Heart right ventricle (tissue), 16 donors: ENCODE measurements at regions of chr19 and their contacts with region 1.

Region 1: GRCh38 chr19:46840136-46840942 is 10.3 kb downstream of the AP2S1 start:
- DNase-seq: peak in 1 of 2 donors; percentile 47
- ATAC-seq: peak; percentile 15 to 77 (median 60)
- H3K4me3 ChIP-seq: no peak overlapping the region
- H3K27ac ChIP-seq: peak overlapping the region in 9 of 10 donors; percentile 21 to 81 (median 50)
- H3K4me1 ChIP-seq: peaks cover 3 to 35% (median 17%) of the 10 kb centered on the region in 9 donors
- H3K27me3 ChIP-seq: no peaks in the 10 kb centered on the region
- CTCF ChIP-seq: peak; percentile 65 to 90 (median 86)

Region 2: DNA sequence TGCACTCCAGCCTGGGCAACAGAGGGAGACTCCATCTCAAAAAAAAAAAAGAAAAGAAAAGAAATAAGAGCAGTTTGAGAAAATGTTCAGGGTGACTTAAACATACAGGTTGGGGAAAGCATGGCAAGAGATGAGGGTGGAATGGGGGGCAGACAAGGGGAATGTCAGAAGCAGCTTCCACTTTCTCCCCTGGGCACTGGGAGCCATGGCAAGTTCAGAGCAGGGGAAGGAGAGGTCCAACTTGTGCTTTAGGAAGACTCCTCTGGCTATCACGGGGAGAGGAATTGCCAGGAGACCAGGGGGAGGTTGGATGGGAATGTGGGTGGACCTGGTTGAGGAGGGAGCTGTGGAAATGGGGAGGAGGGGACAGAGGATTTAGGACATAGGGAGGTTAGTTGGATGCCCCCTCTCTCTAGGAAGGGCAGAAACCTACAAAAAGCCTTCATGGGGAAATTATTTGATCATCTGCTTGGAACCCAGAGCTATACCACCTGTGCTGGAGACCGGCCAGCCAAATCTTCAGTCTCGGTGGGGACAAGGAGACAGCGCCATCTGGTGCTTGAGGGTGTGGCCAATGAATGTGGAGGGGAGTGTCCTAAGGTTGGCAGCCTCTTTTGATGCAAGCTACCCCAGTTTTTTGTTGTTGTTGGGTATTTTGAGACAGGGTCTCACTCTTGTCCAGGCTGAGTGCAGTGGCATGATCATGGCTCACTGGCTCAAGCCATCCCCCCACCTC is 86.8 kb before region 1 on chr19:
- intact Hi-C with region 1: loop called (anchors 1 to 5 kb)
- DNase-seq: peak in 1 of 2 donors; percentile 52
- ATAC-seq: peak in 2 of 8 donors; percentile 16 to 20
- H3K4me3 ChIP-seq: no peak overlapping the region
- H3K27ac ChIP-seq: no peak overlapping the region
- H3K4me1 ChIP-seq: peaks cover 0 to 29% (median 4%) of the 10 kb centered on the region in 9 donors
- H3K27me3 ChIP-seq: no peaks in the 10 kb centered on the region
- CTCF ChIP-seq: peak in 7 of 9 donors; percentile 43 to 65 (median 53)

Region 3: GRCh38 chr19:46759817-46760333 is 80.5 kb before region 1 on chr19:
- intact Hi-C with region 1: loop called (anchors 1 to 5 kb)
- DNase-seq: no peak
- ATAC-seq: peak in 1 of 8 donors; percentile 22
- H3K4me3 ChIP-seq: no peak overlapping the region
- H3K27ac ChIP-seq: no peak overlapping the region
- H3K4me1 ChIP-seq: peaks cover 0 to 39% (median 8%) of the 10 kb centered on the region in 9 donors
- H3K27me3 ChIP-seq: no peaks in the 10 kb centered on the region
- CTCF ChIP-seq: no peak

Region 4: GRCh38 chr19:46788262-46788967 is 51.9 kb before region 1 on chr19 and contains the start of gene SLC1A5:
- intact Hi-C with region 1: loop called in 3 of 10 experiments (anchors 10 kb)
- DNase-seq: peak; percentile 95 to 97
- ATAC-seq: peak; percentile 89 to 94 (median 92)
- H3K4me3 ChIP-seq: peak within 1 kb of the TSS; percentile 53 to 87 (median 68)
- H3K27ac ChIP-seq: peak within 1 kb of the TSS; percentile 63 to 93 (median 88)
- H3K4me1 ChIP-seq: peaks cover 9 to 53% (median 40%) of the 10 kb centered on the region in 9 donors
- H3K27me3 ChIP-seq: peaks cover 0 to 6% (median 0%) of the 10 kb centered on the region in 7 donors
- CTCF ChIP-seq: no peak
- total RNA-seq, gene SLC1A5: 3.2 to 17.7 (median 5.3) TPM

Region 5: GRCh38 chr19:46878613-46879375 is 38.5 kb after region 1 on chr19:
- intact Hi-C with region 1: no loop called
- DNase-seq: no peak
- ATAC-seq: peak in 2 of 8 donors; percentile 31 to 42
- H3K4me3 ChIP-seq: no peak overlapping the region
- H3K27ac ChIP-seq: no peak overlapping the region
- H3K4me1 ChIP-seq: peaks cover 0 to 27% (median 9%) of the 10 kb centered on the region in 9 donors
- H3K27me3 ChIP-seq: no peaks in the 10 kb centered on the region
- CTCF ChIP-seq: no peak